H1 (cell line): ENCODE measurements at regions of chr7 and their contacts with region 1.

Region 1: GRCh38 chr7:74068393-74069085 is 15.1 kb upstream of the LIMK1 start:
- DNase-seq: no peak
- H3K4me3 ChIP-seq: no peak overlapping the region
- H3K27ac ChIP-seq: no peak overlapping the region
- H3K4me1 ChIP-seq: peaks cover 0 to 11% (median 3%) of the 10 kb centered on the region in 4 experiments; a peak in 3 of 7 replicates
- H3K27me3 ChIP-seq: no peaks in the 10 kb centered on the region
- CTCF ChIP-seq: no peak
- EP300 ChIP-seq: no peak
- POLR2A ChIP-seq: no peak
- RAD21 ChIP-seq: no peak

Region 2: DNA sequence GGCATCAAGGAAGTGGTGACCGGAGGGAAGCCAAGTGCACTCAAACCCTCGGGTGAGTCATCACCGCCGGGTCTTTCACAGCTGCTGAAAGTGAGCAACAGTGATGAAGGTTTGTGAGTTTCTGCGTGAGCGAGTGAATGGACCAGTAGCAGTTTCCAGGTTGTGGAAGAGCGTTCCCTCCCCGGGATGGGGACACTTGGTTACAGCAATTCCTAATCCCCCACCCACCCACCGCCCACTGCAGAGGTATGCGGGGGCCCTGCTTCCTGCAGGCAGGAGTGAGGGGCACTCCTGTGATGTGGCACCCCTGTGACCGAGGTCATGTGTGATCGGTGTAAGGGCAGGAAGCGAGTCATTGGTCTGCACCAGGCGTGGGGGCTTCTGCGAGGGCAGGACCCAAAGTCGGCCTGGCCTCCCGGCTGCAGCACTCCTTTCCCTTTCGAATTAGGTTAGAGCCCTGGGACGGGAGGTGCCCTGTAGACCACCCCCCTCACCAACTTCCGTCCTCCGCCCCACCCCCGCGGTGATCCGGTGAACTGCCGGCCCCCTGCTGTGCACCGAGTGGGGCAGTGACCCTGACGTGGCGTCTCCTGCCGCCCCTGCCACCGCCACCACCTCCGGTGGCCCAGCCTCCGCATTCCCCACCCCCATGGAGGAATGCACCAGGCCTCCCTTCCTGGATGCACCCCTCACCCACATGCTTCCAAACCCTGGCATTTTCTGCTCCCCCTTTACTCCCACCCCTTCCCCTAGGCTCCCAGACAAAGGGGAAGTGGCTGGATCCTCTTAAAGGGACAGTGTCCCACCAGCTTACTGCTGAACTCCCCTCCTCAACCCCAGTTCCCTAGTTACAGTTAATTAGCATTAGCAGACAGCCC is 25.9 kb after region 1 on chr7:
- CTCF ChIA-PET with region 1: interaction called, 16 read pairs
- POLR2A ChIA-PET with region 1: no interaction called
- DNase-seq: peak; percentile 79 to 87
- H3K4me3 ChIP-seq: peak overlapping the region; percentile 1 to 51 (median 20); a peak in 6 of 8 replicates
- H3K27ac ChIP-seq: peak overlapping the region; percentile 52; the same call in 1 of the 2 replicates
- H3K4me1 ChIP-seq: peaks cover 8 to 31% (median 26%) of the 10 kb centered on the region in 4 experiments
- H3K27me3 ChIP-seq: no peaks in the 10 kb centered on the region
- CTCF ChIP-seq: no peak
- EP300 ChIP-seq: no peak
- POLR2A ChIP-seq: 0 out of 3 replicates have a peak, but pooled peaks of 1 of the 2 experiments have one; percentile 36
- RAD21 ChIP-seq: peak in 1 of 2 experiments; percentile 14; a peak in 1 of 4 replicates

Region 3: DNA sequence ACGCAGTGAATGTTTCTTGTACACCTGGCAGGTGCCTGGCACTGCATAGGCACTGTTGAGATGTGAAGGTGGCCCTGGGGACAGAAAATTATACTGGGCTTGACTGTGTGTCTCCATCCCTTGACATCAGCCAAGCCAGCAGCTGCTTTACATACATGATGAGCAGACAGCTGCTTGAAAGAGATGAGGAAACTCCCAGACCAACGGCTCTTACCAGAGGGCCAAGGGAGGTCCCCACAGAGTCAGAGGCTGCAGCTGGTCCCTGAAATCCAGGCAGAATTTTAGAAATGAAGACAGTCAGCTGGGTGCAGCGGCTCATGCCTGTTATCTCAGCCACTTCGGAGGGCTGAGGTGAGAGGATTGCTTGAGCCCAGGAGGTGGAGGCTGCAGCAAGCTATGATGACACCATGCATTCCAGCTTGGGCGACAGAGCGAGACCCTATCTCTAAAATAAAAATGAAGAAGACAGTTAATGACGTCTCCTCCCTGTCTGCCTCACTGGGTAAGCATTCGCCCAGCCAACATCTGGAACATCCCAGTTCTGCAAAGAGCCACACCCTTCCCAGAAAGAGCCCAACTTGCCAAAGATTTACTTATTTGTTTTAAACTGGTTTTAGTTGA is 32.6 kb after region 1 on chr7:
- CTCF ChIA-PET with region 1: interaction called, 16 read pairs
- POLR2A ChIA-PET with region 1: interaction called, 4 read pairs
- DNase-seq: no peak
- H3K4me3 ChIP-seq: no peak overlapping the region
- H3K27ac ChIP-seq: no peak overlapping the region
- H3K4me1 ChIP-seq: no peaks in the 10 kb centered on the region
- H3K27me3 ChIP-seq: no peaks in the 10 kb centered on the region
- CTCF ChIP-seq: no peak
- EP300 ChIP-seq: no peak
- POLR2A ChIP-seq: no peak
- RAD21 ChIP-seq: no peak

Region 4: DNA sequence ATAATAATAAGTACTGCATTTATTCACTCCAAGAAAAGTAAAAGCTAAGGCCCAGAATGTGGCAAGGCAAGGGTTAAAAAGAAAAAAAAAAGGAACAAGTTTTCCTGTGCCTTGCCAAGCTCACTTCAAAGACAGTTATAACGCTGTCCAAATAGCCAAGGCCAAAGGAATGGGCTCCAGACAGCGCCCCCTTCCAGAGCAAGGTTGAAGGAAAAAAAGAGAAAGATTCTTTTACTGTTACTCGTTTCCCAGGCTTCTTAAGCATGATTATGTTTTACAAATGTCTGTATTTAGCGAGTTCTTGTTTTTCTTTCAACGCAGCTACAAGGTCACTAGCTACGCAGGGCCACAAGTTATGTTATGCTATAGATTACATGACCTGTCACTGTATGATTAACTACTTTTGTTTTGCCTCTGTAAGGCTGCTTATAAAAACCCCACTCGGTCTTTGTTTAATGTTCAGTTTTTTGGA is 96.5 kb after region 1 on chr7:
- CTCF ChIA-PET with region 1: interaction called, 14 read pairs
- POLR2A ChIA-PET with region 1: no interaction called
- DNase-seq: peak in 1 of 2 experiments; percentile 56
- H3K4me3 ChIP-seq: no peak overlapping the region
- H3K27ac ChIP-seq: no peak overlapping the region
- H3K4me1 ChIP-seq: no peaks in the 10 kb centered on the region
- H3K27me3 ChIP-seq: no peaks in the 10 kb centered on the region
- CTCF ChIP-seq: peak; percentile 23 to 72 (median 51)
- EP300 ChIP-seq: no peak
- POLR2A ChIP-seq: no peak
- RAD21 ChIP-seq: peak; percentile 48 to 62; a peak in 3 of 4 replicates

Region 5: GRCh38 chr7:74183613-74184450 is 115.3 kb after region 1 on chr7:
- CTCF ChIA-PET with region 1: interaction called, 30 read pairs
- POLR2A ChIA-PET with region 1: interaction called, 4 read pairs
- DNase-seq: no peak
- H3K4me3 ChIP-seq: no peak overlapping the region
- H3K27ac ChIP-seq: no peak overlapping the region
- H3K4me1 ChIP-seq: peaks cover 0 to 6% (median 2%) of the 10 kb centered on the region in 4 experiments; a peak in 4 of 7 replicates
- H3K27me3 ChIP-seq: no peaks in the 10 kb centered on the region
- CTCF ChIP-seq: peak; percentile 28 to 53 (median 51)
- EP300 ChIP-seq: no peak
- POLR2A ChIP-seq: no peak
- RAD21 ChIP-seq: peak; percentile 45 to 58; a peak in 3 of 4 replicates

Region 6: GRCh38 chr7:74193054-74193453 is 124.5 kb after region 1 on chr7:
- CTCF ChIA-PET with region 1: interaction called, 10 read pairs
- POLR2A ChIA-PET with region 1: no interaction called
- DNase-seq: no peak
- H3K4me3 ChIP-seq: no peak overlapping the region
- H3K27ac ChIP-seq: no peak overlapping the region
- H3K4me1 ChIP-seq: no peaks in the 10 kb centered on the region
- H3K27me3 ChIP-seq: no peaks in the 10 kb centered on the region
- CTCF ChIP-seq: no peak
- EP300 ChIP-seq: no peak
- POLR2A ChIP-seq: no peak
- RAD21 ChIP-seq: no peak